Posterior cingulate gyrus (tissue), 11 donors: ENCODE measurements at regions of chr10 and their contacts with region 1.

Region 1: DNA sequence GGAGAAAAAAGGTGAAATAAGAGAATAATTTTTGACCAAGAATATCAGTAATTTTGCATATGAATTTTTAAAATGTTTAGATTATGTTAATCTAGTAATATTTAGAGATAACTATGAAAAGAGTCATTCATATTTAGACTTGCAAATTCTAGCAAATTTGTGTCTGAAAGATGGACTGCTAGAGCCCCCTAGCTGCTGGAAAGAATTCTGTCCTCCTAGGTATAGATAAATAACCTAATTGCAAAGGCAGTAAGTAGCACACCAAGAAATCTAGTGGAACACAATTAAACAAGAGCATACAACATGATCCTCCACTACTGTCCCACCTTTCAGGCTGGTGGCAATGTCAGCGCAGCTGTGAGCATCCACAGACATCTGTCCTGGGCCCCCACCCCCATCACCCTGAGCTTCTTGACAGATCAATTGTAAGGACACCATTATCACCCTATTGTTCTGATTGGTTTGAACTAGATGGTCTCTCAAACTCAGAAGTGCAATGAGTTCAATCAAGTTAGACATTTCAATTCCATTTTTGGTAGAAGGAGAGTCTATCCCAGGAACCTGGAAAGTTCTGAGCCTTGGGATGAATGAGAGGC is 15.0 kb upstream of the GFRA1 start:
- DNase-seq: peak in 3 of 10 donors; percentile 49 to 55 (median 51)

Region 2: DNA sequence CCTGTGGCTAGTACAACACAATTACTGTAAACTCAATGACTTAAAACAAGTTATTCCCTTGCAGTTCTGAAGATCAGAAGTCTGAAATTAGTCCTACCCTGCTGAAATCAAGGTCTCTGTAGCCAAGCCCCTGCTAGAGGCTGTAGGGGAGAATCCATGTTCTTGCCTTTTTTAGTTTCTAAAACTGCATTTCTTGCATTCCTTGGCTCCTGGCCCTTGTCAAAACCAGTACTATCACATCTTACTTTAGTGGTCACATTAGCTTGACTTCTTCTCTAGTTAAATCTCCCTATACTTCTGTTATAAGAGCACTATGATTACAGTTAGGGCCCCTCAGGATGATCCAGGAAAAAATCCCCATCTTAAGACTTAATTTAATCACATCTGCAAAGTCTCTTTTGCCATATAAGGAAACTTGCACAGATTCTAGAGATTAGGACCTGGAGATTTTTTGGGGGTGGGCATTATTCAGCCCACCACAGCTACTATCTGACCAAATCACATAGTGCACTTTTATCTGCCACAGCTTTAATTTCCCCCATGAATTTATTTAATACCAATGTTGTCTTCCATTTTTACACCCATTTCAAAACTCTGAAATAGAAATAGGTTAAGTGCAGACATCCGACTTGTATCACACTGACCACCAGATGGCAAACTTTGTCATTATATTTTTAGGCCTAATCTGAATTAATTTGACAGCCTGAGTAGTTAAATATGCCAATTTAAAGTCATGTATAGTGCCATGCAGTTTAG is 581.8 kb before region 1 on chr10:
- intact Hi-C with region 1: loop called (anchors 2 kb)
- DNase-seq: no peak

Region 3: DNA sequence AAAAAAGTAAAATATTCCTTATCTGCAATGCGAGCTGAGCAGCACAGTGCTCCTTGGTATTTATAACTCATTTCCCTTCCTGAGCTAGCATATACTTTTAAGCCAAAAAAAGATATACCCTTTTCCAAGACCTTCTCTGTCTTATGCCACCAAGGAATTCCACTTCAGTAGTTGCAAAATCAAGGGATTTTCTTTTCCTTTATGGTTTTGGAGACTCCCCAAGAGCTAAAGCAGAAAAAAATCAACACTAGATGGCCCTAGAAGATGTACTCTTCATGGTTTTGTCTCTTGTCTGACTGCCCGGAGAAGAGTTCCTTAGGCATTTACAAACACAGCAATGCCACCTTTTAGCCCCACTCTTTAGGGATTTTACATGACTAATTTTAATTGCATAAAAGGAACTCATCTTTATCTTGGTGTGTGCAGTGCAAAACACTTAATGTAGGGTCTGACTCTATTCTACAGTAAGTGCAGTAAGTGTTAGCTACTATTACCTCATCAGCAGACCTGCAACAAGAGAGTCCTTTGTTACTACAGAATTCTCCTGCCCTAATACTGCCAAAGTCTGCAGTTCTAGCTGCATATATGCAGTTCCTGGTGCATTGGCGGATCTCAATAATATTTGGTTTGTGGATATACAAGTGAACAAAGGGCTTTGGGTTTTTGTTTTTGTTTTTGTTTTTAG is 458.3 kb before region 1 on chr10:
- intact Hi-C with region 1: loop called (anchors 10 kb)
- DNase-seq: no peak

Region 4: GRCh38 chr10:116069856-116070255 is 218.1 kb before region 1 on chr10:
- intact Hi-C with region 1: no loop called
- DNase-seq: no peak